Right cardiac atrium (tissue), 5 donors: ENCODE measurements at regions of chr3 and their contacts with region 1.

Region 1: DNA sequence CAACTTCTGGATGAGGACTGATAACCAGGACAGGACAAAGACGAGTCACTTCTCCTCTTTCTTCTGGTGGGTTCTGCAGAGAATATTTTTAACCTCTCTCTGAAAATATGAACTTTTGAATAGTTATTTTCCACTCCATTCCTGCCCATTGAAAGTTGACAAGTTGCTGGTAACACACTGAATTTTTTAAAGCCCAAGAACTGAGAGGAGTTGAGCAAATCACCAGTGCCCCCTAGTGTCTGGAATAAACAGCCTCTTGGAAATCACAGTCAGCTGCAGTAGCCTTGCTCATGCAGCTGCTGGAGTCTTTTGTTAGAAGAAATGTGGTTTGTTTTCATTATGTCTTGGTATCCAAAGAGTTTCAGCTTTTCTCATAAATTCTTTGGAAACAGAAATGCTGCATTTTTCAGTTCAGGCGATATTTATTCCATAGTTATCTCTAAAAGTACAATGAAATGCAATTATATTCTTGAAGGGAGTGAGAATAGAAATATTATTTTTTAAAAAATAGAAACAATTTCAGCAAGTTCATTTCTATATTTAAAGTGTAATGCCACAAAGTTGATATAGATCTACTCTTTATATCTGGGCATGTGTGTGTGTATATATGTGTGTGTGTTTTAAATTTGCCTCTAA is 741.0 kb upstream of the CBLB start:
- DNase-seq: peak in 2 of 3 donors; percentile 19 to 25
- ATAC-seq: peak; percentile 64 to 74
- H3K4me3 ChIP-seq: no peak overlapping the region
- H3K27ac ChIP-seq: no peak overlapping the region
- H3K4me1 ChIP-seq: no peaks in the 10 kb centered on the region
- H3K27me3 ChIP-seq: no peaks in the 10 kb centered on the region

Region 2: DNA sequence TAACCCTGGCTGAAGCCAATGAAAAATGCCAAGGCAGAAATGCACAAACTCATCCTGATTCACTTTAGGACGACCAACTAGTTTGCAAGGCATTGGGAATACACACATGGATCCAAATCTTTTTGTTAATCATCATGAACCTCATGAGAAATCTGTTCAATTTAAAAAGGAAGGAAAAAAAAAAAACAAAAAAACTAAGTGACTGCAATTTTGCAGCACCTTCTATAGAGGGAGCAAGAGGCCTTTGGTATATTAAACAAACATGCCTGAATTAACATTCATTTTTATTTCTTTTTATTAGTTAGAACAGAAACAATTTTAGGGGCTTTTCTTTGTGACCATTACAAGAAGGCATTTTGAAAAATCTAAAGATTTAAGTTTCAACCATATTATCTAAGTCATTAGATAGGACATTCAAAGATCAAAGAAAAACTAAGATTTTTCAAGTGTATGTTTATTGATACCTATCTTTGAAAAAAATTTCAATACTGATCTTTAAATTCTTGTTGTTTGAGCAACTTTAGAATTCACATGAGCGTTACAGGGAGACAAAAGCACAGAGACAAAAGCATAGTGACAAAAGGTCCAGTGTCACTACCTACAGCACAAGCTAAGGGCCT is 923.4 kb before region 1 on chr3:
- intact Hi-C with region 1: loop called in 2 of 4 experiments (anchors 10 kb)
- DNase-seq: no peak
- ATAC-seq: no peak
- H3K4me3 ChIP-seq: no peak overlapping the region
- H3K27ac ChIP-seq: no peak overlapping the region
- H3K4me1 ChIP-seq: no peaks in the 10 kb centered on the region
- H3K27me3 ChIP-seq: no peaks in the 10 kb centered on the region

Region 3: GRCh38 chr3:106673926-106674569 is 64.3 kb after region 1 on chr3:
- intact Hi-C with region 1: no loop called
- DNase-seq: no peak
- ATAC-seq: no peak
- H3K4me3 ChIP-seq: no peak overlapping the region
- H3K27ac ChIP-seq: no peak overlapping the region
- H3K4me1 ChIP-seq: no peaks in the 10 kb centered on the region
- H3K27me3 ChIP-seq: no peaks in the 10 kb centered on the region